Activated B cell treated with CpG ODN at 0.5 μM for 24 hours (primary cell): ENCODE measurements at regions of chr22 and their contacts with region 1.

Region 1: DNA sequence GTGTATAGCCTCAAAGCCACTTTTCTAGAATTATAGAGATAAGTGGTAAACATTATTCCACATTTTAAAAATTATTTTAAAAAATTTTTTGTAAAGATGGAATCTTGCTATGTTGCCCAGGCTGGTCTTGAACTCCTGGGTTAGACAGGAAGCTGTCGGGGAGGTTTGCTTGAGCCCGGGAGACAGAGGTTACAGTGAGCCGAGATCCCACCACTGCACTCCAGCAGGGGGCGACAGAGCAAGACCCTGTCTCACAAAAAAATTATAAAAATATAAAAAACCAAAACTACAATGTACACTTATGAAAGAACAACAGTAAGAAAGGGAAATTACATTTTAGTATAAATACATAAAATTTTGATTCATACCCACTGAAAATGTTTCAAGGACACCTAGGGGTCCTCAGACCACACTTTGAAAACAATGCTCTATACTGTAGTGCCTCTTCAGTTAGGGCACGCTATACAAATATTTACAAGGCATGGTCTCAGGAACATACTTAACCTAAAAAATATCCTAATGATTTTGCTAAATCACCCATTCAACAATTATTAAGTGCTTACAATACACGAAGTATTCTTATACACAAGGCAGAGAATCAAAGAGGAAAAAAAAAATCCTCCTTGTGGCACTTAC is 111.2 kb downstream of the MRTFA start:
- DNase-seq: peak; percentile 50
- ATAC-seq: peak; percentile 63
- H3K4me3 Mint-ChIP-seq: no peak overlapping the region
- H3K27ac Mint-ChIP-seq: no peak overlapping the region
- H3K4me1 Mint-ChIP-seq: peaks cover 48% of the 10 kb centered on the region
- H3K27me3 Mint-ChIP-seq: no peaks in the 10 kb centered on the region
- CTCF ChIP-seq: peak; percentile 39

Region 2: DNA sequence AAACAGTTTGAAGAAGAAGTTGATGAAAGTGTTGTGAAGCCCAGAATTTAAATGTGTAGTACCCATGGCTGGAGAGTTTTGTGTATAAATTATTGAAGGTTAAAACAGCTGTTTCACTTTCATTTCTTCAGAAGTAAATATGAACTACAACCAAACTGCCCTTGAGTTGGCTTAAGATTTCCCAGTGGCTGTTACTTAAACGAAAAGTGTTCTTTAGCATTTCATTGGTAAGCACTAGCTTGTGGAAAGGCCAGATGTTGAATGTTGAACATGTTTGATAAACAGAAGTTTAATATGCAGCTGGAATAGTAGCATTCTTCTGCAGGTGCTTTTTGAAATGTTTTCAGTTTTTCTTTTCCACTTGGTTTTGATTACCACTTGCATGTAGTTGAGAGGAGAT is 430.9 kb before region 1 on chr22:
- CTCF ChIA-PET with region 1: no interaction called
- POLR2A ChIA-PET with region 1: no interaction called
- intact Hi-C with region 1: no loop called
- DNase-seq: no peak
- ATAC-seq: no peak
- H3K4me3 Mint-ChIP-seq: peak overlapping the region; percentile 55
- H3K27ac Mint-ChIP-seq: peak overlapping the region; percentile 81
- H3K4me1 Mint-ChIP-seq: peaks cover 75% of the 10 kb centered on the region
- H3K27me3 Mint-ChIP-seq: no peaks in the 10 kb centered on the region
- CTCF ChIP-seq: no peak

Region 3: GRCh38 chr22:40597526-40598430 is 72.4 kb after region 1 on chr22:
- CTCF ChIA-PET with region 1: interaction called, 20 read pairs
- POLR2A ChIA-PET with region 1: interaction called, 14 read pairs
- intact Hi-C with region 1: loop called (anchors 1 kb)
- DNase-seq: no peak
- ATAC-seq: no peak
- H3K4me3 Mint-ChIP-seq: peak overlapping the region; percentile 29
- H3K27ac Mint-ChIP-seq: peak overlapping the region; percentile 96
- H3K4me1 Mint-ChIP-seq: peaks cover 66% of the 10 kb centered on the region
- H3K27me3 Mint-ChIP-seq: no peaks in the 10 kb centered on the region
- CTCF ChIP-seq: no peak

Region 4: GRCh38 chr22:40609216-40609615 is 83.8 kb after region 1 on chr22:
- CTCF ChIA-PET with region 1: no interaction called
- POLR2A ChIA-PET with region 1: no interaction called
- intact Hi-C with region 1: no loop called
- DNase-seq: no peak
- ATAC-seq: no peak
- H3K4me3 Mint-ChIP-seq: no peak overlapping the region
- H3K27ac Mint-ChIP-seq: no peak overlapping the region
- H3K4me1 Mint-ChIP-seq: peaks cover 44% of the 10 kb centered on the region
- H3K27me3 Mint-ChIP-seq: no peaks in the 10 kb centered on the region
- CTCF ChIP-seq: no peak

Region 5: GRCh38 chr22:40759294-40759840 is 234.0 kb after region 1 on chr22:
- CTCF ChIA-PET with region 1: interaction called, 12 read pairs
- POLR2A ChIA-PET with region 1: no interaction called
- intact Hi-C with region 1: loop called (anchors 2 kb)
- DNase-seq: no peak
- ATAC-seq: no peak
- H3K4me3 Mint-ChIP-seq: no peak overlapping the region
- H3K27ac Mint-ChIP-seq: no peak overlapping the region
- H3K4me1 Mint-ChIP-seq: peaks cover 26% of the 10 kb centered on the region
- H3K27me3 Mint-ChIP-seq: no peaks in the 10 kb centered on the region
- CTCF ChIP-seq: no peak

Region 6: DNA sequence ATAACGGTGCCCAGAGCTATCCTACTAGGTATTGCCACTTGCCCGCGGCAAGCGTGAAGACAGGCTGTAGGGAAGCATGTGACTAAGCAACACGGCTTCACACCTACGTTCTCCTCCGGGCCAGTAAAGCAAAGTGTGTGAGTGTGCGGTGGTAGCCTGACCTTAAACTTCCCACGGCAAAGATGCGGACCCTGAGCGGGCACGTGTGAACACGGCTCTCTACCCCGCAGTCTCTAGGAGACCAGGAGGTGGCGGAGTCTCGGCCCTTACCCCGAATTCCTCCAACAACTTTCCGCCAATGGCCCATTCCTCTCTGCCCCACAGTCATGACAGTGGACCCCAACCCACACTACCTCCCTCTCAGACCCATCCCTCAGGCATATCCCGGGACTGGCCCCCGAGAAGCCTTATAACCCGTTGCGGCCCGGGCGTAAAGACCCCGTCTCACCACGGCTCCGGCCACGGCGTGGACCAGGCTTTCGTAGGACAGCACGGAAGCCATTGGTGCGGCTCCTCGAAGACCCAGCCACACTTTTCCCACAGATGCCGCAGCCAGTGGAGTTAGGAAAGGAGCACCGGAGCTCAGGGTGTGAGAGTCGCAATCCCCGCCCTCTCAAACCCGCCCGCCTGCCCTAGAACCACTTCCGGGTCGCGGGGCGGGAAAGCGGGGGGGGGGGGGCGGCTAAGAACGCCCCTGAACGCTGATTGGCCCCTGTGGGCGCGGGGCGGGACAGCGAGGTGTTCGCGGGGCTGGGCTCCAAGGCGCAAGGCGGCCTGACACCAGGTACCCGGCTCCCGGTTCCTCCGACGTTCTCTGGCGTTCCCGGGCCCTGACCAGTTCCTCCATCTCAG is 293.6 kb after region 1 on chr22 and contains the start of gene SLC25A17:
- CTCF ChIA-PET with region 1: interaction called, 3 read pairs
- POLR2A ChIA-PET with region 1: interaction called, 3 read pairs
- intact Hi-C with region 1: loop called (anchors 10 kb)
- DNase-seq: peak; percentile 78
- ATAC-seq: peak; percentile 93
- H3K4me3 Mint-ChIP-seq: peak within 1 kb of the TSS; percentile 98
- H3K27ac Mint-ChIP-seq: peak within 1 kb of the TSS; percentile 92
- H3K4me1 Mint-ChIP-seq: peaks cover 36% of the 10 kb centered on the region
- H3K27me3 Mint-ChIP-seq: no peaks in the 10 kb centered on the region
- CTCF ChIP-seq: no peak
- total RNA-seq, gene SLC25A17: 14.8 and 19.3 TPM in 2 replicates